ENCODE measurements at regions of chr7 and their contacts with region 1.

Region 1: GRCh38 chr7:72476608-72477305 is 64.6 kb upstream of the CALN1 start:
- DNase-seq: no peak
- ATAC-seq: no peak
- H3K4me3 ChIP-seq: no peak overlapping the region
- H3K27ac ChIP-seq: no peak overlapping the region
- H3K4me1 ChIP-seq: no peaks in the 10 kb centered on the region
- H3K27me3 ChIP-seq: no peaks in the 10 kb centered on the region
- CTCF ChIP-seq: no peak
- POLR2A ChIP-seq: no peak

Region 2: DNA sequence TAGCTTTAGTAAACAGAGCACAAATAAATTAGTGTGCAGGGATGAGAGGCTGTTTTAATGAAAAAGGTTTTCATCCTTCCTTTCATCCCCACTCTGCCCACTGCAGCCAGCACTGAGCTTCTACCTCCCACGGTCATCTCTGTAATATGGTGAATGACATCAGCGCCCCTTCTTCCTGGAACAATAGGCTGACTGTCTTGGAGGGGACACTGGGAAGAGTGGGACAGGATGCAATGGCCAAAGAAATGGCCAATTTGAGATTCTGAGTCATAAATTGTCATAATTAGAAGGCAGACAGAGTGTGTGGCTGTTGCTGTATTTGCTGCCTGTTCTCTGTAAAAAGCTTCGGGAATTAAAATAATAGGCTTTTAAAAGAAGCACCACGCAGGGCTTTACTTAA is 62.1 kb after region 1 on chr7:
- intact Hi-C with region 1: loop called in 1 of 10 experiments (anchors 10 kb)
- DNase-seq: no peak
- ATAC-seq: no peak
- H3K4me3 ChIP-seq: no peak overlapping the region
- H3K27ac ChIP-seq: no peak overlapping the region
- H3K4me1 ChIP-seq: no peaks in the 10 kb centered on the region
- H3K27me3 ChIP-seq: no peaks in the 10 kb centered on the region
- CTCF ChIP-seq: no peak
- POLR2A ChIP-seq: no peak